Activated CD8-positive, alpha-beta T cell treated with anti-CD3 and anti-CD28 coated beads for 36 hours (primary cell): ENCODE measurements at regions of chr11 and their contacts with region 1.

Region 1: GRCh38 chr11:68297812-68298658 is 14.4 kb upstream of the LRP5 start:
- DNase-seq: peak; percentile 79
- ATAC-seq: peak; percentile 99
- H3K4me3 Mint-ChIP-seq: no peak overlapping the region
- H3K27ac Mint-ChIP-seq: no peak overlapping the region
- H3K4me1 Mint-ChIP-seq: no peaks in the 10 kb centered on the region
- H3K27me3 Mint-ChIP-seq: no peaks in the 10 kb centered on the region
- CTCF ChIP-seq: peak; percentile 94

Region 2: DNA sequence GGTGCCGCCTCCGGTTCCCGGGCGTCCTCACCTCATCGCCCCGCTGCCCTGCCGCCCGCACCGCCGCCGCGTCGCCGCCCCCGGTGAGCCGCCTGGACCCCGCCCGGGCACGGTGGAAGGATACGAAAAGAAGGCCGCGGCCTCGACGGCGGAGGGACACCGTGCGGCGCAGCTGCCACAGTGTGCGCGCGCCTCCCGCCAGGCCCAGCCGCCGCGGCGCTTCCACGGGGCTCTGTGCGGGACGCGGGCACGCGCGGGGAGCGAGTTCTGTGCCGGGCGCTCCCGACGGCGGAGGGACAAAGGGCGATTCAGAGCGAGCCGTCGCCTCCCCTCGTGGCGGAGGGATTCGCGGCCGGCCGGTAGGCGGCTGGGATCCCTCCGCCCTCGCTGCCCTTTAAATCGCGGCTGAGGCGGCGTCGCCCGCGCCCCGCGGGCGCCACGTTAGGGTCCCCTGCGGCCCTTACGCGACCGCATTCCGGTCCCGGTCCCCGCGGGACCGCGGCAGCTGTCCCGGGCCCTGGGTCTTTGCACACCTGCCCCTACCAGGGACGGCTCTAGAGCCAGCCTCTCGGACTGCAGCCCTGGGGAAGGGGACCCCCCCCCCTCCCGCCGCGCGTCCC is 84.4 kb before region 1 on chr11:
- CTCF ChIA-PET with region 1: interaction called, 15 read pairs
- POLR2A ChIA-PET with region 1: no interaction called
- intact Hi-C with region 1: no loop called
- DNase-seq: peak; percentile 78
- ATAC-seq: peak; percentile 53
- H3K4me3 Mint-ChIP-seq: peak overlapping the region; percentile 55
- H3K27ac Mint-ChIP-seq: no peak overlapping the region
- H3K4me1 Mint-ChIP-seq: peaks cover 41% of the 10 kb centered on the region
- H3K27me3 Mint-ChIP-seq: peaks cover 9% of the 10 kb centered on the region
- CTCF ChIP-seq: no peak

Region 3: GRCh38 chr11:68266121-68266891 is 31.7 kb before region 1 on chr11:
- CTCF ChIA-PET with region 1: interaction called, 224 read pairs
- POLR2A ChIA-PET with region 1: interaction called, 4 read pairs
- intact Hi-C with region 1: no loop called
- DNase-seq: no peak
- ATAC-seq: no peak
- H3K4me3 Mint-ChIP-seq: no peak overlapping the region
- H3K27ac Mint-ChIP-seq: no peak overlapping the region
- H3K4me1 Mint-ChIP-seq: peaks cover 21% of the 10 kb centered on the region
- H3K27me3 Mint-ChIP-seq: no peaks in the 10 kb centered on the region
- CTCF ChIP-seq: no peak

Region 4: DNA sequence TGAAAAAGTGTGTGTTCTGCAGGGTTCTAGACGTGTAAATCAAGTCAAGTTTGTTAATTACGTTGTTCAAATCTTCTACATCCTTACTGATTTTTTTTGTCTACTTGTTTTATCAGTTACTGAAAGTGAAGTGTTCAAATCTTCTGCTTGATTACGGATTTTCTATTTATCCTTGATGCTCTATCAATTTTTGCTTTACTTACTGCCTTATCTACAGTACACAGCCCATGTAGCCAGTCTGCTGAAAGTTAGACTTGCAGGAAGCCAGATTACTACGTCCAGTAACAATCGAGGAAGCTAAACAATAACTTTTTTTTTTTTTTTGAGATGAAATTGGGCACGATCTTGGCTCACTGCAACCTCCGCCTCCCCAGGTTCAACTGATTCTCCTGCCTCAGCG is 10.6 kb before region 1 on chr11:
- CTCF ChIA-PET with region 1: interaction called, 13 read pairs
- POLR2A ChIA-PET with region 1: no interaction called
- intact Hi-C with region 1: no loop called
- DNase-seq: no peak
- ATAC-seq: no peak
- H3K4me3 Mint-ChIP-seq: no peak overlapping the region
- H3K27ac Mint-ChIP-seq: no peak overlapping the region
- H3K4me1 Mint-ChIP-seq: peaks cover 9% of the 10 kb centered on the region
- H3K27me3 Mint-ChIP-seq: peaks cover 7% of the 10 kb centered on the region
- CTCF ChIP-seq: no peak

Region 5: DNA sequence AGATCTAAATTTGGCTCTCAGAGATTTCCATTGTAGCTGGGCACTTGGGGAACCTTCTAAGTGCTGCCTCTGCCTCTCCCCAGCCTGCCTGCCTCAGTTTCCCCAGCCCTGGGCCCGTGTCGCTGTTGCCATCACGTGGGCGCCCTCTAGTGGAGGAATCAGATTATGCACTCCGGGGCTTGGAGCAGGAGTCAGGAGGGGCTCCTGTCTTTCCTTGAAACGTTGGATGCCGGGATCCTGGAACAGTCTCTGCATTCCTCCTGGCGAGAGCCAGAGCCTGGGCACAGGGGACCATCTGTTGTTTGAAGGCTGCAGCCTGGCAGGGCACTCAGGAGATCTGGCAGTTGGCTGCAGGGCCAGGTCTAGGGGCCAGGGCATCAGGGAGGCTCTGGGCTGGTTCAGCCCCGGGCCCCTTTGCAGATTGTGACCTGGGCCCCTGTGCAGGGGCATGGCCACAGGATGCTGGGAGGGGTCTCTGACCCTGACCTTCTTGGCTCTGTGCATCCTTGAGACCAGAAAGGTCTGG is 86.0 kb after region 1 on chr11:
- CTCF ChIA-PET with region 1: interaction called, 10 read pairs
- POLR2A ChIA-PET with region 1: no interaction called
- intact Hi-C with region 1: no loop called
- DNase-seq: peak; percentile 79
- ATAC-seq: peak; percentile 69
- H3K4me3 Mint-ChIP-seq: no peak overlapping the region
- H3K27ac Mint-ChIP-seq: no peak overlapping the region
- H3K4me1 Mint-ChIP-seq: peaks cover 15% of the 10 kb centered on the region
- H3K27me3 Mint-ChIP-seq: peaks cover 2% of the 10 kb centered on the region
- CTCF ChIP-seq: peak; percentile 95

Region 6: DNA sequence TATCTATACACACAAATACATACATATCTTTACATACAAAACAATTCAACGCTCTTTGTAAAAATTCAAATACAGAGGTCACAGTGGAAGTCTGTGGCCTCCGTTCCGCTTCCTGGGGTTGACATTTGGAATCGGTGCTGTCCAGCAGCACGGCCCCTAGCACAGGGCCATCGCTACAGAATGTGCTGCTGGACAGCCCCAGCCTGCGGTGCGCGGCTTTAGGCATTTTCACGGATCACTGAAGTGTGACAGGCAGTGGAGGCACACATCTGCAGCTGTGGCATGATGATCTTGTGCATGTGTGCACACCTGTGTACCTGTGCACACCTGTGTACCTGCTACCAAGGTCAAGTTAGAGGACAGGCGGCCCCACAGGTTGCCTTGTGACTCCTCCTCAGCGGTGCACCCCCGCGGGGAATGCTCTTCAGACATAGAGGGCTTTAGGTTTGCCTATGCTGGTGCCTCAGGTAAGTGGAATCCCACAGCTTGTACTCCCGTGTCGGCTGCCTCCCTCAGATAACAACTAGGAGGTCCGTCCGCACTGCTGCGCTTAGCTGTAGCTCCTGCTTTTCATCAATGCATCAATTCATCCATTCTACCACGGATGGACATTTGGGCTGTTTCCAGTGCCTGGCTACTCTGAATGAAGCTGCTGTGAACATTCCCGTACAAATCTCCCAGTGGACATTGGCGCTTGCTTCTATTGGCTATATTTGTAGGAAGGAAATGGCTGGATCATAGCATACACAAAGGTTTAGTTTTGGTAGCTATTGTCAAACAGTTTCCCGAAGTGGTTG is 416.2 kb after region 1 on chr11:
- CTCF ChIA-PET with region 1: no interaction called
- POLR2A ChIA-PET with region 1: no interaction called
- intact Hi-C with region 1: no loop called
- DNase-seq: no peak
- ATAC-seq: no peak
- H3K4me3 Mint-ChIP-seq: no peak overlapping the region
- H3K27ac Mint-ChIP-seq: no peak overlapping the region
- H3K4me1 Mint-ChIP-seq: no peaks in the 10 kb centered on the region
- H3K27me3 Mint-ChIP-seq: no peaks in the 10 kb centered on the region
- CTCF ChIP-seq: no peak